ENCODE measurements at regions of chr20 and their contacts with region 1.

Region 1: DNA sequence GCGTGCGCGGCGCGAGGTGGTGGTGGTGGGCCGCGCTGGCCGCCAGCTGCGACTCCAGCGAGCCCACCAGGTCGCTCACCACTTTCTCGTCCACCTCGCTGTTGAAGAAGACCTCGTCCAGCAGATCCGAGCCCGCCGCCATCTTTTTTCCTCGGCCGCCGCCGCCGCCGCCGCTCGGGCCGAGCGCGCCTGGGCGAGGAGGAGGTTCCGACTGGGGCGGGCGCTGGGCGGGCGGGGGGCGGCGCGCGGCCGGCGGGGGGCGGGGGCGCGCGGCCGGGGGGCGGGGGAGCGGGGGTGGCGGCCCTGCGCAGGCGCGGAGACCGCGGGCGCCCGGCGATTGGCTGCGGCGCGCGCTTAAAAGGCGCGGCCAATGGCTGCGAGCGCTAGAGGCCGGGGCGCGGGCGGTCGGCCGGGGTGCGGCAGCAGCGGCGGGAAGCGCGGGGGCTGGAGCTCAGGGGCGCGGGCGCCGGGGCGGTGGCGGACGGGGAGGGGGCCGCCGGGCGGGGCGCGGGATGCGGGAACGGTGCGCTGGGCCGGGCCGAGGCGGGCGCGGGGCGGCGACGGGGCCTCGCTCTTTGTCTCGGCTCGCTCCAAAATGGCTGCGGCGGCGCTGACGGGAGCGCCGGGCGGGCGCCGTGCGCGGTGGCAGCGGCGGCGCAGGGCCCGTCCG is at the start of gene TAF4:
- DNase-seq: peak; percentile 91
- ATAC-seq: peak; percentile 75
- H3K4me3 Mint-ChIP-seq: peak within 1 kb of the TSS; percentile 88
- H3K27ac Mint-ChIP-seq: peak within 1 kb of the TSS; percentile 90
- H3K4me1 Mint-ChIP-seq: peaks cover 24% of the 10 kb centered on the region
- H3K27me3 Mint-ChIP-seq: peaks cover 2% of the 10 kb centered on the region
- total RNA-seq, gene TAF4: 22.6 to 23.8 TPM

Region 2: GRCh38 chr20:61912665-61913422 is 153.0 kb before region 1 on chr20:
- POLR2A ChIA-PET with region 1: no interaction called
- DNase-seq: peak; percentile 46
- ATAC-seq: peak; percentile 90
- H3K4me3 Mint-ChIP-seq: peak overlapping the region; percentile 45
- H3K27ac Mint-ChIP-seq: peak overlapping the region; percentile 34
- H3K4me1 Mint-ChIP-seq: peaks cover 21% of the 10 kb centered on the region
- H3K27me3 Mint-ChIP-seq: peaks cover 7% of the 10 kb centered on the region

Region 3: DNA sequence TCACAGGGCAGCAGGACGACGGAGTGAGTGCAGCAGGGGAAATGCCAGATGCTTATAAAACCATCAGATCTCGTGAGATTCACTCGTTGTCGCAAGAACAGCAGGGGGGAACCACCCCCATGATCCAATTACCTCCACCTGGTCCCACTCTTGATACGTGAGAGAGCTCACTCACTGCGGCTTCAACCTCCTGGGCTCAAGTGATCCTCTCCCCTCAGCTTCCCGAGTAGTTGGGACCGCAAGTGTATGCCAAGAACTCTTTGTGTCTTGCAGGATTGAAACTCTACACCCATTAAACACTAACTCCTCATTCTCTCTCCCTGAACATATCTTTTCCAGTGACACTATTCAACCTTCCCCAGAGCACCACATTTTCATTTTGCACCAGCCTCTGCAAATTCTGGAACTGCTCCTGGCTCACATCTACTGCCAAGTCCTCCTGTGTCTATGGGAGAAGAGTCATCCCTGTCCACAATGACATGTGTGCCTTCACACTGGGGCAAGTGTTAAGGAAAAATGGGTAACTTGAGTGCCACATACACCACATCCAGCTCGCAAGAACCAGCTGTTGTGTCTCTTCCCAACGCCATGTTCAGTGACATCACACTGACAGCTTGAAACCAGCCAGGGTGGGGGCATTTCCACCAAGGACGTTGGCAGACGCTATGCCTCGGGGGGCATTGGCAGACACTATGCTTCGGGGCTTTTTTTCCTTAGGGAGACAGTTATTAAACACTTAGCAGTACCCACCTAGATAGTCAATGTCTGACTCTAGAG is 14.6 kb after region 1 on chr20:
- POLR2A ChIA-PET with region 1: no interaction called
- DNase-seq: no peak
- ATAC-seq: no peak
- H3K4me3 Mint-ChIP-seq: no peak overlapping the region
- H3K27ac Mint-ChIP-seq: no peak overlapping the region
- H3K4me1 Mint-ChIP-seq: no peaks in the 10 kb centered on the region
- H3K27me3 Mint-ChIP-seq: peaks cover 5% of the 10 kb centered on the region

Region 4: GRCh38 chr20:62121776-62122631 is 56.2 kb after region 1 on chr20 and contains the start of gene LSM14B:
- POLR2A ChIA-PET with region 1: interaction called, 111 read pairs
- DNase-seq: peak; percentile 98
- ATAC-seq: peak; percentile 82
- H3K4me3 Mint-ChIP-seq: peak within 1 kb of the TSS; percentile 89
- H3K27ac Mint-ChIP-seq: peak within 1 kb of the TSS; percentile 93
- H3K4me1 Mint-ChIP-seq: peaks cover 35% of the 10 kb centered on the region
- H3K27me3 Mint-ChIP-seq: no peaks in the 10 kb centered on the region
- total RNA-seq, gene LSM14B: 45.1 to 45.5 TPM

Region 5: DNA sequence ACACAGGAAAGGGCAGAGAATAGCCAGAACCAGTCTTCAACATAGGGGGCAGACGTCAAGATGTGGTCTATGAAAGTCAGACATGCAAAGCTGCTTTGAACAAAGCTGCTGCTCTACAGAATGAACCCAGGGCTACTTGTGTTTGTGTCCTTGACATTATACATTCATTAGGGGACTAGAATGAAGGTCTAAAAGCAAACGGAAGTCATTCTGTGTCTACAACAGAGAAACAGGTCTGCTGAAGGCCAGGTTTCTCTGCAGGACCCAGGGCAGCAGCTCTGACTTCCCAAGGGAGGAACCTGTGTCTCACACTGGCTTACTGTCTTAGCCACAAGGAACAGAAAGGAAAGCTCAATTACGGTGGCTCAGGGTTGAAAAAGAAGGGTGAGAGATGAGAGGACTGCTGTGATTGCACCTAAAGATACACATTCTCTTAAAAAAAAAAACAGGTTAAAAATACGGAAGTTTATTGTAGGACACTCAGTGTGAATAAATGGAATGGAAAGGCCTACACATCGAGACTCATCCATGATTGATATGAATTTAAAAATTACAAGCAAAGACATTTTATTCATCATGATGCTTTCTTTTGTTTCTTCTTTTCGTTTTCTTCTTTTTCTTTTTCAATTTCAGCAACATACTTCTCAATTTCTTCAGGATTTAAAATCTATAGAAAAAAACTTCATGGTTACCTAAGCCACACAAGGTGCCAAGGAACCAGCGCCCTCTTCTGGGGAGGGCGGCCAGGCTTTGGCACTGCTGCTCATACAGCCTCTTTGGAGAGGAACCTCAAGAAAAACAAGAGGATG is 70.7 kb after region 1 on chr20:
- POLR2A ChIA-PET with region 1: interaction called, 32 read pairs
- DNase-seq: peak; percentile 74
- ATAC-seq: peak; percentile 61
- H3K4me3 Mint-ChIP-seq: no peak overlapping the region
- H3K27ac Mint-ChIP-seq: peak overlapping the region; percentile 60
- H3K4me1 Mint-ChIP-seq: peaks cover 25% of the 10 kb centered on the region
- H3K27me3 Mint-ChIP-seq: no peaks in the 10 kb centered on the region

Region 6: GRCh38 chr20:62143118-62143973 is 77.5 kb after region 1 on chr20 and contains the starts of genes PSMA7 and SS18L1:
- POLR2A ChIA-PET with region 1: interaction called, 32 read pairs
- DNase-seq: peak; percentile 93
- ATAC-seq: peak; percentile 85
- H3K4me3 Mint-ChIP-seq: peak within 1 kb of the TSS; percentile 92
- H3K27ac Mint-ChIP-seq: peak within 1 kb of the TSS; percentile 92
- H3K4me1 Mint-ChIP-seq: peaks cover 35% of the 10 kb centered on the region
- H3K27me3 Mint-ChIP-seq: no peaks in the 10 kb centered on the region
- total RNA-seq, gene PSMA7: 219 to 236 TPM
- total RNA-seq, gene SS18L1: 21.0 to 23.3 TPM

Measured in activated naive CD8-positive, alpha-beta T cell treated with anti-CD3 and anti-CD28 coated beads, Interleukin-2, amount 10 ng/mL, durations not matched to agents 7 days and 5 days (primary cell).